Natural killer cell (primary cell): ENCODE measurements at regions of chr7 and their contacts with region 1.

Region 1: DNA sequence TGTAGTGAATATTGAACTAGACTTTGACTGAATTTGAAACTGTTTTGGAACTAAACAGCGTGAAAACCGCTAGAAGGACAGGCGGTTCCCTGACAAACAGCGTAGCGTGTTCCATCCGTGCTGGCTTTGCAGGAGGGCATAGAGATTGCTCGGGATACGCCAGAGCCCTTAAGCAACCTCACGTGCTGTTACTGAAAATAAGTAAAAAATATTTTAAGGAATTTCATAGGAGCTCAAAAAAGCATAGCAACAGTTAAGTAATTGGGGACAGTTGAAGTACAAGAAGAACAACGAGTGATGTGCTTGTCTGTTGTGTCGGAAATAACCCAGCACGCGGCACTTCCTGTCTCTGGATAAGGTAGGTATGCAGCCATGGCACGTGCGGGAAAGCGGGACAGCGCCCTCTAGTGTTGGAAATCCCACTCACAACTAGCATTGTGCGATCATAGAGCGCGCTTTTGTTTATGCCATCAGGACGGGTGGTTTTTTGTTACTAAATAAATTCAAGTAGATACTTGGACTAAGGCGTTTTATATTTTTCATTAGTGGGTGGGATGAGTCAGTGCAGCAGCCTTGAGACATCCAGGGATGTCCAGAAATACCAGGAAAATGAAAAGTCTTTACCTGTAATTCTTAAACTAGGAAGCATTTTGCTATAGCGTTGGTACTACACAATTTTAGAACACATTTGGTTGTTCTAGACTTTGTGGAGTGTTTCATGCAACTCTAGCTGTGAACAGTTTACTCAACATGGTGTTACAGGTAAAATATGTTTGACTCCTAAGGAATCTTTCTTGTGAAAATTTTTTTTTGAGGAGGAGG is 50.4 kb downstream of the DNAJB6 start:
- DNase-seq: peak; percentile 78 to 95
- ATAC-seq: peak; percentile 76 to 92 (median 87)
- H3K4me3 ChIP-seq: no peak overlapping the region
- H3K4me3 Mint-ChIP-seq: peak overlapping the region; percentile 49
- H3K27ac ChIP-seq: peak overlapping the region; percentile 42
- H3K27ac Mint-ChIP-seq: peak overlapping the region; percentile 80 to 84
- H3K4me1 ChIP-seq: peaks cover 38% of the 10 kb centered on the region
- H3K4me1 Mint-ChIP-seq: peaks cover 57 to 63% of the 10 kb centered on the region in 2 donors
- H3K27me3 ChIP-seq: no peaks in the 10 kb centered on the region
- H3K27me3 Mint-ChIP-seq: no peaks in the 10 kb centered on the region
- CTCF ChIP-seq: peak; percentile 94

Region 2: GRCh38 chr7:156969972-156970420 is 417.2 kb before region 1 on chr7:
- intact Hi-C with region 1: loop called (anchors 5 kb)
- DNase-seq: peak in 1 of 2 donors; percentile 34
- ATAC-seq: peak in 2 of 3 donors; percentile 38 to 46
- H3K4me3 ChIP-seq: no peak overlapping the region
- H3K4me3 Mint-ChIP-seq: no peak overlapping the region
- H3K27ac ChIP-seq: no peak overlapping the region
- H3K27ac Mint-ChIP-seq: no peak overlapping the region
- H3K4me1 ChIP-seq: no peaks in the 10 kb centered on the region
- H3K4me1 Mint-ChIP-seq: no peaks in the 10 kb centered on the region
- H3K27me3 ChIP-seq: no peaks in the 10 kb centered on the region
- H3K27me3 Mint-ChIP-seq: no peaks in the 10 kb centered on the region
- CTCF ChIP-seq: peak; percentile 27